Head of caudate nucleus (tissue), 42 donors: ENCODE measurements at regions of chr10 and their contacts with region 1.

Region 1: GRCh38 chr10:23438550-23439441 is at the start of gene OTUD1:
- DNase-seq: peak; percentile 90 to 99 (median 97)

Region 2: GRCh38 chr10:23253780-23254179 is 185.0 kb before region 1 on chr10:
- intact Hi-C with region 1: no loop called
- DNase-seq: no peak

Region 3: GRCh38 chr10:23314835-23315239 is 124.0 kb before region 1 on chr10:
- intact Hi-C with region 1: loop called (anchors 10 kb)
- DNase-seq: peak in 28 of 42 donors; percentile 19 to 88 (median 63)

Region 4: GRCh38 chr10:23344241-23344841 is 94.5 kb before region 1 on chr10 and contains the start of gene C10orf67:
- intact Hi-C with region 1: loop called (anchors 2 kb)
- DNase-seq: peak; percentile 12 to 85 (median 68)

Region 5: DNA sequence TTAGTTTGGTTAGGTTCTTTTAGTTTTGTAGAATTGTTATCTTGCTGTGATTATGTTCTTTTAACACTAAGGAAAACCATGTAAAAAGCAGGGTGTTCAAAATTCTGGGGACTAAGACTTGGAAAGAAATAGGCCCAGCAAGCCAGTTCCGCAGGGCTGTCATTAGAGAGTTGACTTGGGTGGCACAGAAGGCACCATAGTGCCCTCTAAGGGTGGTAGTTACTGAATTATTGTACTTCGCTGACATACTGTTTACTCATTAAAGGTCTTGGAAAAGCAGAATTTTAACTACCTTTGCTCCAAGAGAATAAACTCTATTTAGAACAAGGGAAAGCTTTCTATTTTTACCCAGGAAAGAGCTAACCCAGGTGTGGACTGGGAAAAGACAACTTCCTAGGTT is 86.6 kb after region 1 on chr10:
- intact Hi-C with region 1: no loop called
- DNase-seq: peak in 32 of 42 donors; percentile 10 to 72 (median 44)